K562 (cell line): ENCODE measurements at regions of chr11 and their contacts with region 1.

Region 1: DNA sequence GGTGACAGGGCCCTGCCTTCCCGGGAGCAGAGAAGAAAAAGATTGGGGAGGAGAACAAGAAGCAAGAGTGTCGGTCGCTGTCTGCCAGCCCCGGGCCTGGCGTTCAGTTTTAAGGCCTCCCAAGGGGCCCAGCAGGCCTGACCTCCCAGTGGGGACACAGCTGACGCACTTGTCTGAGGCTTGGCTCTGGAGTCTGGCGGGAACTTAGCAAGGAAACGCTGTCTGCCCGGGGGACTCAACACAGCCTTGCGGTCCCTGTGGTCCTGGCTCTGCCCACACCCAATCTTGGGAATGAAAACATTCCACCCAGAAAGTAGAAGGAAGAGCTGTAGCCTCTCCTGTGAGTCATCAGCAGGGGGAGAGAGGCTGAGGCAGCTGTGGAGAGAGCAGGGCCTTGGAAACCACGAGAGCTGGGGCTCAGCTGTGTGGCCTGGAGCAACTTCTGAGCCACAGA is 54.4 kb downstream of the TRAF6 start:
- DNase-seq: peak in 1 of 4 experiments; percentile 11
- ATAC-seq: peak; percentile 47
- H3K4me3 ChIP-seq: no peak overlapping the region
- H3K27ac ChIP-seq: no peak overlapping the region
- H3K4me1 ChIP-seq: peaks cover 6 to 13% of the 10 kb centered on the region in 2 experiments; a peak in 3 of 5 replicates
- H3K27me3 ChIP-seq: peaks cover 2 to 37% of the 10 kb centered on the region in 2 experiments; a peak in 3 of 5 replicates
- CTCF ChIP-seq: no peak
- EP300 ChIP-seq: no peak
- POLR2A ChIP-seq: no peak
- RAD21 ChIP-seq: no peak

Region 2: DNA sequence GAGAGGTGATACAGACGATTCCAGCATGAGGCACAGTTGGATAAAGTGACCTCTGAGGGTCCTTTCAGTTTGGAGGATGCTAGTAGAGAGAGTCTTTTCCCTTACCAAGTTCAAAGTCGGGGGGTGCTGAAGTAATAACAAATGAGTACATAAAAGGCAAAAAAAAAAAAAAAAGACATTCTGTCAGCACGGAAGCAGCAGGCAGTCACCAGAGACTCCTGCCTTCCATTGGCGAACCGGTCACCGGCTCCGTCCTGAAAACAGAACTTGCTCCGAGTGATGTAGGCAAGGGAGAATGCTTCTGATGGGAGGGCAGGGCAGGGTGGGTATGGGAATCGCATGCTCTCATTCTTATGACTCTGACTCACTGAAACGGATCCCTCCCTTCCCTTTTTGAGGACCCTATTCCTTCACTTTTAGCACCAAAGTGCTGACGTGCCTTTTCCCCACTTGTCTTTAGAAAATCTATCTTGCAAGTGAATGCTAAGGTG is 93.7 kb before region 1 on chr11:
- CTCF ChIA-PET with region 1: no interaction called
- POLR2A ChIA-PET with region 1: no interaction called
- in situ Hi-C with region 1: no loop called
- intact Hi-C with region 1: loop called (anchors 5 kb)
- DNase-seq: no peak
- ATAC-seq: no peak
- H3K4me3 ChIP-seq: no peak overlapping the region
- H3K27ac ChIP-seq: no peak overlapping the region
- H3K4me1 ChIP-seq: no peaks in the 10 kb centered on the region; a peak in 3 of 5 replicates
- H3K27me3 ChIP-seq: peaks cover 2 to 27% of the 10 kb centered on the region in 2 experiments; a peak in 4 of 5 replicates
- CTCF ChIP-seq: no peak
- EP300 ChIP-seq: no peak
- POLR2A ChIP-seq: no peak
- RAD21 ChIP-seq: no peak

Region 3: DNA sequence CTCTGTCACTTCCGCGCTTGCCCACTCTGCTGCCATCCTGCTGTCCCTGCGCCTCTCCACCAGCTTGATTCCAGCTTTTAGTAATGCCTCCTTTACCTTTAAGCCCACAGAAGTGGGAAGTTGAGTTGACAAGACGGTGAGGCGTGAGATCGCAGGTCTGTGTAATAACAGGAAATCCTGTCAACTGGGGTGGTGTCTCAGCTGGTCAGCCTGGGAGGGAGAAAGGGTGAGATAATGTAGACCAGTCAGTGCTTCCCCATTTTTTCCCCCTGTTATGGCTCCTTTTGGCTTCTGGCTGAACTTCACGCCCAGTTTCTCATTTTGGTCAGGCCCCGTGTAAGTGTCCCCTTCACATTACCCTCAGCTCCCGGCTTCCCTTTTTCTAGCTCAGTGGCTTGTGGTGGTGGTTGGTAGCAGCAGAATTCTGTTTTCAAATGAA is 44.5 kb before region 1 on chr11:
- CTCF ChIA-PET with region 1: no interaction called
- POLR2A ChIA-PET with region 1: no interaction called
- in situ Hi-C with region 1: no loop called
- intact Hi-C with region 1: no loop called
- DNase-seq: peak in 2 of 4 experiments; percentile 17 to 31
- ATAC-seq: peak; percentile 64
- H3K4me3 ChIP-seq: no peak overlapping the region
- H3K27ac ChIP-seq: peak overlapping the region; percentile 25; the same call in 1 of the 3 replicates
- H3K4me1 ChIP-seq: peaks cover 10 to 40% of the 10 kb centered on the region in 2 experiments; a peak in 4 of 5 replicates
- H3K27me3 ChIP-seq: no peaks in the 10 kb centered on the region
- CTCF ChIP-seq: no peak
- EP300 ChIP-seq: no peak
- POLR2A ChIP-seq: no peak
- RAD21 ChIP-seq: no peak